Transverse colon (tissue), 4 donors: ENCODE measurements at regions of chr2 and their contacts with region 1.

Region 1: DNA sequence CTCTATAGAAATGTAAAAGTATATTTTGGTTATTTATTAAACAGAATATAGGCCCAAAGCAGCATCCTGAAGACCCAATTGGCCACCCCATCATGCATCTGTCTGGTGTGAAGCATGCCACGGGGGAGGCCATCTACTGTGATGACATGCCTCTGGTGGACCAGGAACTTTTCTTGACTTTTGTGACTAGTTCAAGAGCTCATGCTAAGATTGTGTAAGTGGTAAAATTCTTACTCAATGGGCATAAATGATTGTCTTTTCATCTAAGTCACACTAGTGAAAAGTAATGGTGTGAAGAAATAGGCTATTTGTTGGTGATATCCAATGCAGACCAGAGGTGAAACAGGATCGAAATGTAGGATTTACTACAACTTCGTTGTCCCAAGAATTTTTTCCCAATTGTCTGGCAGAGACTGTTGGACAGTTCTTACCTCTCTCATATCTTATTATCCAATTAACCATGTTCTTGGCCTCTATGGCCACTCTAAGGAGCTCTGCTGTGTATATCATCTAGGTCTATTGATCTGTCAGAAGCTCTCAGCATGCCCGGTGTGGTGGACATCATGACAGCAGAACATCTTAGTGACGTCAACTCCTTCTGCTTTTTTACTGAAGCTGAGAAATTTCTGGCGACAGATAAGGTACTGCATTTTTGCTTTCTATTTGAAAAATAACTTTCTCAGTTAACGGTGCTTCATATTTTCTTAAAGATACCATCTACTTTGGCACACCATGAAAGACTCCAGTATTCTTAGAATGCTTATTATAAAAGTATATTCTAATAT is 35.0 kb downstream of the AOX1 start:
- DNase-seq: no peak
- H3K4me3 ChIP-seq: no peak overlapping the region
- H3K27ac ChIP-seq: no peak overlapping the region
- H3K4me1 ChIP-seq: no peaks in the 10 kb centered on the region
- H3K27me3 ChIP-seq: no peaks in the 10 kb centered on the region
- CTCF ChIP-seq: no peak
- EP300 ChIP-seq: no peak
- POLR2A ChIP-seq: no peak

Region 2: DNA sequence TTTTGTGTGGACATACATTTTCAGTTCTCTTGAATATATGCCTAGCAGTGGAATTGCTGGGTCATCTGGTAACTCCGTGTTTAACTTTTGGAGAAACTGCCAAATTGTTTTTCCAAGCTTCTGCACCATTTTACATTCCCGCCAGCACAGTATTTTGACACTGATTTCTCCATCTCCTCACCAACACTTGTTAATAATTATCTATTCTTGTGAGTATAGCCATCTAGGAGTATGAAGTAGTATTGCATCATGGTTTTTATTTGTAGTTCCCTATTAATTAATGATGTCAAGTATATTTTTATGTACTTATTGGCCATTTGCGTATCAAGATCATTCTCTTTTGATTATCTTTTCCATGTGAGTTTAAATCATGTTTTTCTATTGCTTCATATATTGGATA is 52.9 kb before region 1 on chr2:
- in situ Hi-C with region 1: no loop called
- intact Hi-C with region 1: no loop called
- DNase-seq: no peak
- H3K4me3 ChIP-seq: no peak overlapping the region
- H3K27ac ChIP-seq: no peak overlapping the region
- H3K4me1 ChIP-seq: no peaks in the 10 kb centered on the region
- H3K27me3 ChIP-seq: no peaks in the 10 kb centered on the region
- CTCF ChIP-seq: no peak
- EP300 ChIP-seq: no peak
- POLR2A ChIP-seq: no peak

Region 3: GRCh38 chr2:200585730-200586643 is 34.8 kb before region 1 on chr2 and contains the start of gene AOX1:
- in situ Hi-C with region 1: no loop called
- intact Hi-C with region 1: loop called (anchors 1 kb)
- DNase-seq: peak; percentile 47
- H3K4me3 ChIP-seq: peak within 1 kb of the TSS; percentile 18 to 71 (median 42)
- H3K27ac ChIP-seq: peak within 1 kb of the TSS; percentile 55 to 70 (median 63)
- H3K4me1 ChIP-seq: peaks cover 0 to 12% (median 10%) of the 10 kb centered on the region in 4 donors
- H3K27me3 ChIP-seq: no peaks in the 10 kb centered on the region
- CTCF ChIP-seq: no peak
- EP300 ChIP-seq: no peak
- POLR2A ChIP-seq: no peak
- total RNA-seq, gene AOX1: 12.0 to 28.1 (median 19.0) TPM